A673 (cell line): ENCODE measurements at regions of chr2 and their contacts with region 1.

Region 1: DNA sequence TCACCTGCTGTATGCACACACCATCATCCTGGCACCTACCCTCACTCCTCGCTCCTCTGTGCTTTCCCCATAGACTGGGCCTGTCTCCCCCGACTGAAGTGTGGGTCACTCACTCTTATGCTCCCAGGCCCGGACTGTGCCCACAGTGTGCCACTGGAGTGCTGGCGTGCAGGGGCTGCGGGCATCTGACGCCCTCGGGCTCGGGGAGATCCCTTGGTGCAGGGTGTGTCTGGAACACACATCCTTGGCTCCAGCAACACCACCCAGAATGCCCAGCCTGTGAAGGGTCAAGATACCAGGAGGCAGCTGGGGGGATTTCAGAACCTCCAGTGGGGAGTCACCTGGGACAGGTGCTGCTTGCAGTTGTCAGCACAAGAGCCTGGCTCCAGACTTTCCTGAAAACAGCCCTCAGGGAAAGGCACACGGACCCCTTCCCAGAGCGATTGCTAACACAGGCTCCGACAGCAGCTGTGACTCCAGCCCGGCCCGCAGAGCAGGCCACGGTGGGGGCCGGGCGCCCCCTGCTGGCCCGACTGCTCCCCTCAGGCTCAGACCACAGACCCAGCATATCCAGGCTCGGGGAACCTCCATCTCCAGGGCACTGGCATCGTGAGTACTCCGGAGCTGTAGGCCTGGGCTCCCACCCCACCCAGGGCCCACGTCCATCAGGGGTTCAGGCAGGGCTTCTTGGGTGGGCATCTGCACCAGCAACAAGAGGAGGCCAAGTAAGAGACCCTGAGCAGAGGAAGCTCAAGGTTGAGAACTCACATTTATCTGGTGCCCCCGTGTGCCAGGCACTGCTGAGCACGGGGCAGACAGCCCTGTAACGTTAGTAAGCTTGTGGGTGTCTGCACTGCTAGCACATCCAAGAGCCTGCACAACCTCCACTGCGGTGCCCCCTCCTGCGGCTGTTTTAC is 8.6 kb downstream of the HS1BP3 start:
- DNase-seq: peak; percentile 78
- H3K4me3 ChIP-seq: no peak overlapping the region
- H3K27ac ChIP-seq: no peak overlapping the region
- H3K4me1 ChIP-seq: no peaks in the 10 kb centered on the region
- H3K27me3 ChIP-seq: no peaks in the 10 kb centered on the region
- CTCF ChIP-seq: peak; percentile 95

Region 2: GRCh38 chr2:20225294-20226151 is 416.8 kb before region 1 on chr2:
- CTCF ChIA-PET with region 1: no interaction called
- POLR2A ChIA-PET with region 1: no interaction called
- intact Hi-C with region 1: loop called (anchors 10 kb)
- DNase-seq: peak; percentile 55
- H3K4me3 ChIP-seq: peak overlapping the region; percentile 57
- H3K27ac ChIP-seq: no peak overlapping the region
- H3K4me1 ChIP-seq: peaks cover 5% of the 10 kb centered on the region
- H3K27me3 ChIP-seq: peaks cover 12% of the 10 kb centered on the region
- CTCF ChIP-seq: peak; percentile 69

Region 3: GRCh38 chr2:20411361-20411894 is 230.9 kb before region 1 on chr2:
- CTCF ChIA-PET with region 1: interaction called, 18 read pairs
- POLR2A ChIA-PET with region 1: no interaction called
- intact Hi-C with region 1: loop called (anchors 1 kb)
- DNase-seq: peak; percentile 80
- H3K4me3 ChIP-seq: no peak overlapping the region
- H3K27ac ChIP-seq: no peak overlapping the region
- H3K4me1 ChIP-seq: no peaks in the 10 kb centered on the region
- H3K27me3 ChIP-seq: no peaks in the 10 kb centered on the region
- CTCF ChIP-seq: peak; percentile 85